Left cardiac atrium (tissue), 4 donors: ENCODE measurements at regions of chr11 and their contacts with region 1.

Region 1: DNA sequence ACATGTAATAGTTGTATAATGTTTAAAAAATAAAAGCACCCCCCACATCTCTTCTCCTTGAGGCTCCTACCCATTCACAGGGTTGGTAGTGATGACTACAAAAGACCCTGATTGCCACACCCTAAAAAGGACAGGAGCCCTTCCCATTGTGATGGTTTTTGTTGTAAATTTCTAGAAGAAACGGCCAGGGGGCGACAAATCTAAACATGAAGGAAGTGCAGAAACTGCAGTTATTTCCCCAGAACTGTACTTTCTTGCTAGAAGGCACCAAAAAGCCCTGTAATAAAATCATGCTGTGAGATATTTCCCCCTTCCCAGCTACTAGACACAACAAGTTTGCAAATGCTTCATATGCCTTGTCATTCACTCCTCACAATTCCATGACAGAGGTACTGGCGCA is 10.8 kb downstream of the PRR5L start:
- DNase-seq: no peak
- ATAC-seq: no peak

Region 2: GRCh38 chr11:36361901-36362391 is 55.1 kb after region 1 on chr11:
- intact Hi-C with region 1: loop called in 1 of 2 experiments (anchors 10 kb)
- DNase-seq: peak; percentile 37
- ATAC-seq: peak in 1 of 2 donors; percentile 82